ENCODE measurements at regions of chr12 and their contacts with region 1.

Region 1: DNA sequence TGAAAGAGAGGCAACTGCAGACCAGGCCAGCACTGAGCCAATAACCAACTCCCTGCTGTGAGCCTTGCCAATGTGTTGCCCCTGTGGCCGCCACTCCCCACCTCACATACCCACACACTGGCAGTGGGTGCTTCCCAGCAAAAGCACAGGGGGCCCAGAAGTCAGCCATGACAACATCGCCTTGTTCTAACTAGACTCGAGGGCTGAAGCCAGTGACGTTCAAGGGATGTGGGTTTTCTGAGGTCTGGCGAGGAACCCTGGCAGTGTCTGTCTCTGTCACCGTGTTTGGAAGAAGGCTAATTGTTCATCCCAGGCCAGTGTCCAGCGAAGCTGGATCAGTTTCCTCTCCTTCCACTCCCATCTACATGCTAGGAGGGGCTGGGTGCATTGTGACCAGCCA is 311.8 kb upstream of the AMIGO2 start:
- DNase-seq: no peak
- ATAC-seq: peak; percentile 45
- H3K4me3 Mint-ChIP-seq: peak overlapping the region; percentile 15
- H3K27ac Mint-ChIP-seq: peak overlapping the region; percentile 100
- H3K4me1 Mint-ChIP-seq: peaks cover 83% of the 10 kb centered on the region
- H3K27me3 Mint-ChIP-seq: no peaks in the 10 kb centered on the region
- CTCF ChIP-seq: no peak

Region 2: GRCh38 chr12:47268501-47269454 is 122.8 kb before region 1 on chr12:
- CTCF ChIA-PET with region 1: no interaction called
- POLR2A ChIA-PET with region 1: no interaction called
- intact Hi-C with region 1: loop called (anchors 1 kb)
- DNase-seq: no peak
- ATAC-seq: peak; percentile 73
- H3K4me3 Mint-ChIP-seq: peak overlapping the region; percentile 62
- H3K27ac Mint-ChIP-seq: peak overlapping the region; percentile 96
- H3K4me1 Mint-ChIP-seq: peaks cover 59% of the 10 kb centered on the region
- H3K27me3 Mint-ChIP-seq: no peaks in the 10 kb centered on the region
- CTCF ChIP-seq: no peak

Region 3: DNA sequence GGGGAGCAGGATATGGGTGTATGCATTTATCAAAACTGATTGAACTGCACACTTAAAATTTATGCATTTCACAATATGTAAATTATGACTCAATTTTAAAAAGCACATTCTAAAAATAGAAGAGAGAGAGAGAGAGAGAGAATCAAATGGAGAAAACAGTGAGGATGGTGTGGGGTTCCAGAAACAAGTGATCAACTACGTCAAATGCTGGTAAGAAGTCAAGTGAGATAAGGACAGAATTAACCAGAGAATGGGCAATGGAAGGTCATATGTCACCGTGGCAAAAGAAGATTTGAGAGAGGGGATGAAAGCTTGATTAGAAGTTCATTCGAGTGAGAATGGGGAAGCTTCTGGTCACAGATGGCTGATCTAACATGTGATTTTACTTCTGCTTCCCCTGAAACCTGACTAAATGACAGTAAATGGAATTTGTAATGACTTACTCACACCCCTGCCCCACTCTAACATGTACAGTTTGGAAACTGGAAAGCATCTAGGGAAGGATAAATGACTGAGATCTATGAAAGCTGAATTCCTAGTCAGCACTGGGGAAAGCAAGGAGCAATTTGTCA is 35.4 kb before region 1 on chr12:
- CTCF ChIA-PET with region 1: interaction called, 45 read pairs
- POLR2A ChIA-PET with region 1: interaction called, 83 read pairs
- intact Hi-C with region 1: loop called (anchors 1 kb)
- DNase-seq: no peak
- ATAC-seq: peak; percentile 77
- H3K4me3 Mint-ChIP-seq: peak overlapping the region; percentile 51
- H3K27ac Mint-ChIP-seq: peak overlapping the region; percentile 97
- H3K4me1 Mint-ChIP-seq: peaks cover 85% of the 10 kb centered on the region
- H3K27me3 Mint-ChIP-seq: no peaks in the 10 kb centered on the region
- CTCF ChIP-seq: no peak

Region 4: DNA sequence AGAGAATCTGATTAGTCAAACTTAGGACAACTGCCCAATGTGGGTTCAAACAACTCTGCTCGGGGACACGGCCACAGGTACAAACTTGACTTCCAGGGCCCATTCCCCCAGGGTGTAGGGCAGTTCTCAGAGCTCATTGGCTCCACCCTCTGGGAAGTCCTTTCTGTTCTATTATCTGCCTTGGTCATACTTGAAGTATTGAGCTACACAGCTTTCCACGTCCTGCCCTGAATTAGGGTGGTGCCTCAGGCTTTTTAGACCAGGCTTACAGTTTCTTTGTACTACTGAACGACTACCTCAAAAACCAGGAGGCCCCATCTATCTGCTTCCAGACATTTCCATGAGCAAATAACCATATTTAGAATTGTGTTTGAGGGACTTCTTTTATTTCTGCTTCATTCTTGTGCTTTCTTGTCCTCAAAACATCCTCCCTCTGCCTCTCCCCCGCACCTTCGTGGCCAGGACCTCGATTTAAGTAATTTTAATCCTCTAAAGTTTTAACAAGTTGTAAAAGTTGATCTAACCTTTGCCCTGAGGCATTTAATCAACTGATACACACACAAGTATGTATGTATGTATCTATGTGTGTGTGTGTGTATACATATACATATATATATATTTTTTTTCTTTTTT is 30.1 kb before region 1 on chr12:
- CTCF ChIA-PET with region 1: interaction called, 45 read pairs
- POLR2A ChIA-PET with region 1: interaction called, 83 read pairs
- intact Hi-C with region 1: loop called (anchors 1 kb)
- DNase-seq: no peak
- ATAC-seq: peak; percentile 68
- H3K4me3 Mint-ChIP-seq: peak overlapping the region; percentile 74
- H3K27ac Mint-ChIP-seq: peak overlapping the region; percentile 94
- H3K4me1 Mint-ChIP-seq: peaks cover 63% of the 10 kb centered on the region
- H3K27me3 Mint-ChIP-seq: no peaks in the 10 kb centered on the region
- CTCF ChIP-seq: no peak